ENCODE measurements at regions of chr9 and their contacts with region 1.

Region 1: GRCh38 chr9:121222524-121223171 is 21.0 kb upstream of the RAB14 start:
- DNase-seq: no peak
- H3K4me3 ChIP-seq: no peak overlapping the region
- H3K27ac ChIP-seq: no peak overlapping the region
- H3K4me1 ChIP-seq: no peaks in the 10 kb centered on the region
- H3K27me3 ChIP-seq: no peaks in the 10 kb centered on the region
- CTCF ChIP-seq: peak; percentile 77

Region 2: DNA sequence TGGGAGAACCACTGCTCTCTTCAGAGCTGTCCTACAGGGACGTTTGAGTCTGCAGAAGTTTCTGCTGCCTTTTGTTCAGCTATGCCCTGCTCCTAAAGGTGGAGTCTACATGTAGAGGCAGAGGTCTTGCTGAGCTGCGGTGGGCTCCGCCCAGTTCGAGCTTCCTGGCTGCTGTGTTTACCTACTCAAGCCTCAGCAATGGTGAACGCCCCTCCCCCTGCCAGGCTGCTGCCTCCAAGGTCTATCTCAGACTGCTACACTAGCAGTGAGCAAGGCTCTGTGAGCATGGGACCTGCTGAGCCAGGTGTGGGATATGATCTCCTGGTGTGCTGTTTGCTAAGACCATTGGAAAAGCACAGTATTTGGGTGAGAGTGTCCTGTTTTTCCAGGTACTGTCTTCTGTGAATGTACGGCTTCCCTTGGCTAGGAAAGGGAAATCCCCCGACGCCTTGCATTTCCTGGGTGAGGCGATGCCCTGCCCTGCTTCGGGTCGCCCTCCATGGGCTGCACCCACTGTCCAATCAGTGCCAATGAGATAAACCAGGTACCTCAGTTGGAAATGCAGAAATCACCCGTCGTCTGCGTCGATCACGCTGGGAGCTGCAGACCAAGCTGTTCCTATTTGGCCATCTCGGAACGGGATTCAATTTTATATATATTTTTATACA is 89.4 kb before region 1 on chr9:
- intact Hi-C with region 1: no loop called
- DNase-seq: no peak
- H3K4me3 ChIP-seq: no peak overlapping the region
- H3K27ac ChIP-seq: no peak overlapping the region
- H3K4me1 ChIP-seq: no peaks in the 10 kb centered on the region
- H3K27me3 ChIP-seq: no peaks in the 10 kb centered on the region
- CTCF ChIP-seq: no peak

Region 3: DNA sequence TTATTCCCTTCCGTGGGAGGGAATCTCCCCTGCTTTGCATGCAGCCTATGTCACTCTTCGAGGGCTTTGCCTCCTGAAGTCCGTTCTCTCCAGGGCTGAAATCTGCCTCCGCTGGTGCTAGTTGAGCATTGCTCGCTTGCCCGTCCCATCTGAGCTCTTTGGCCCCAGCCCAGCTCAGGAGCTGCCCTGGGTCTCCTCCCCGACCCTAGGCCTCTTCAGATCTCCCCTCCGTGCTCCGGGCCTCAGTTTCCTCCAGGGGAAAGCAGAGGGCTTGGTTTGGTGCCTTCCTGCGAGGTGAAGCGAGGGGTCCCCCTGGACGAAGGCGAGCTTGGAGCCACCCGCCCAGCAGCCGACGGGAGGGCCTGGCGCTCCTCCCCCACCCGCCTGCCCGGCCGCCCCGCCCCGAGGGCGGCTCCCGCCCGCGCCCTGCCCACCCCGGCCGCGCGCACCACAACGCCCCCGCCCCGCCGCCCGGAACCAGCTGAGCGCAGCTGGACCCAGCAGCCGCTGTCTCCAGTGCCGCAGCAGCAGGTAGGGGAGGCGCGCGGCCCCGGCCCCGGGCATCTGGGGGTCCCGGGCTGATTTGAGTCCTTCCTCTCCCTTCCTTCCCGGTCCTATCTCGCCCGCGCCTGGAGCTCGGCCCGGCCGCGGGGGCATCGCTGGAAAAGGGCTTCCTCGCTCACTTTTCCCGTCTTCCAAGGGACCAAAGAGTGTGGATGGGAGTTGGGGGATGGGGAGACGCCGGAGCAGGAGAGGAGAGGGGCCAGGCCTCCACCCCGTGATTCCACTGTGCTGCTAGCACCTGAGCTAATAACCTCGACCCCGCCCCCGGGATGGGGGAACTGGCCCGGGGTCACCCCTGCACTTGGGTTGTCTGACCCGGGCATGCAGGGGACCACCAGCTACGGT is 45.3 kb after region 1 on chr9 and contains the start of gene GSN:
- intact Hi-C with region 1: loop called (anchors 5 kb)
- DNase-seq: peak; percentile 89
- H3K4me3 ChIP-seq: peak within 1 kb of the TSS; percentile 86
- H3K27ac ChIP-seq: peak within 1 kb of the TSS; percentile 88
- H3K4me1 ChIP-seq: peaks cover 66% of the 10 kb centered on the region
- H3K27me3 ChIP-seq: no peaks in the 10 kb centered on the region
- CTCF ChIP-seq: peak; percentile 20
- total RNA-seq, gene GSN: 758 TPM